Dorsolateral prefrontal cortex (tissue), 120 donors: ENCODE measurements at regions of chr6 and their contacts with region 1.

Region 1: GRCh38 chr6:115896538-115897129 is 164.1 kb downstream of the FRK start:
- DNase-seq: no peak
- H3K4me3 ChIP-seq: no peak overlapping the region
- H3K27ac ChIP-seq: no peak overlapping the region
- H3K27me3 ChIP-seq: no peaks in the 10 kb centered on the region
- CTCF ChIP-seq: peak; percentile 37 to 89 (median 78)

Region 2: GRCh38 chr6:114735025-114735735 is 1161.5 kb before region 1 on chr6:
- intact Hi-C with region 1: loop called (anchors 10 kb)
- DNase-seq: no peak
- H3K4me3 ChIP-seq: no peak overlapping the region
- H3K27ac ChIP-seq: no peak overlapping the region
- H3K27me3 ChIP-seq: no peaks in the 10 kb centered on the region
- CTCF ChIP-seq: no peak

Region 3: GRCh38 chr6:114747987-114748630 is 1148.5 kb before region 1 on chr6:
- intact Hi-C with region 1: loop called in 1 of 2 experiments (anchors 10 kb)
- DNase-seq: peak in 9 of 10 donors; percentile 7 to 76 (median 54)
- H3K4me3 ChIP-seq: peak overlapping the region in 10 of 59 donors; percentile 4 to 35 (median 23)
- H3K27ac ChIP-seq: no peak overlapping the region
- H3K27me3 ChIP-seq: no peaks in the 10 kb centered on the region
- CTCF ChIP-seq: peak; percentile 68 to 91 (median 82)

Region 4: GRCh38 chr6:117290173-117290846 is 1393.7 kb after region 1 on chr6:
- intact Hi-C with region 1: no loop called
- DNase-seq: no peak
- H3K4me3 ChIP-seq: no peak overlapping the region
- H3K27ac ChIP-seq: no peak overlapping the region
- H3K27me3 ChIP-seq: peaks cover 0 to 25% (median 0%) of the 10 kb centered on the region in 45 donors
- CTCF ChIP-seq: no peak